Heart left ventricle (tissue), 16 donors: ENCODE measurements at regions of chr3 and their contacts with region 1.

Region 1: GRCh38 chr3:47315069-47315647 is 32.4 kb downstream of the KLHL18 start:
- DNase-seq: peak in 4 of 5 donors; percentile 53 to 77 (median 58)
- ATAC-seq: peak in 3 of 4 donors; percentile 13 to 72 (median 41)
- H3K4me3 ChIP-seq: peak overlapping the region in 1 of 12 donors; percentile 3
- H3K27ac ChIP-seq: peak overlapping the region in 1 of 12 donors; percentile 66
- H3K4me1 ChIP-seq: peaks cover 0 to 53% (median 30%) of the 10 kb centered on the region in 12 donors
- H3K27me3 ChIP-seq: no peaks in the 10 kb centered on the region
- CTCF ChIP-seq: no peak
- POLR2A ChIP-seq: no peak

Region 2: DNA sequence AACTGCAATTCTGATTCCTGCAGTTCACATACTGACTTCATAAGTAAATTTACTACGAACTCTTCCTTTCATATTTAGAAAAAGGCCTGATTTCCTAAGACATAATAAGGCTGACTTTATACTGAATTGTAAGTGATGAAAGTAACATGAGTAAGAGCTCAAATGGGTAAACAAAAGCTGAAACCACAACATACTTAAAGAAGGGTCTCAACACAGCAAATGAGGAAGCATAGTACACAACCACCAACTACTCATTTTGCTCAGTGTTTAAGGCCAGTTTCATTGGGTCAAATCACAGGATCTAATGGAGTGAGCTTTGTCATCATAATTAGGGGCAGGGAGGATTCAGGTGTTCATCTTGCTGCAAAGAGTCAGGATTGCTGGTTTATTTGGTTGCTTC is 232.6 kb before region 1 on chr3:
- intact Hi-C with region 1: loop called in 2 of 10 experiments (anchors 10 kb)
- DNase-seq: no peak
- ATAC-seq: no peak
- H3K4me3 ChIP-seq: no peak overlapping the region
- H3K27ac ChIP-seq: peak overlapping the region in 1 of 12 donors; percentile 12
- H3K4me1 ChIP-seq: peaks cover 0 to 23% (median 0%) of the 10 kb centered on the region in 12 donors
- H3K27me3 ChIP-seq: no peaks in the 10 kb centered on the region
- CTCF ChIP-seq: no peak
- POLR2A ChIP-seq: no peak

Region 3: DNA sequence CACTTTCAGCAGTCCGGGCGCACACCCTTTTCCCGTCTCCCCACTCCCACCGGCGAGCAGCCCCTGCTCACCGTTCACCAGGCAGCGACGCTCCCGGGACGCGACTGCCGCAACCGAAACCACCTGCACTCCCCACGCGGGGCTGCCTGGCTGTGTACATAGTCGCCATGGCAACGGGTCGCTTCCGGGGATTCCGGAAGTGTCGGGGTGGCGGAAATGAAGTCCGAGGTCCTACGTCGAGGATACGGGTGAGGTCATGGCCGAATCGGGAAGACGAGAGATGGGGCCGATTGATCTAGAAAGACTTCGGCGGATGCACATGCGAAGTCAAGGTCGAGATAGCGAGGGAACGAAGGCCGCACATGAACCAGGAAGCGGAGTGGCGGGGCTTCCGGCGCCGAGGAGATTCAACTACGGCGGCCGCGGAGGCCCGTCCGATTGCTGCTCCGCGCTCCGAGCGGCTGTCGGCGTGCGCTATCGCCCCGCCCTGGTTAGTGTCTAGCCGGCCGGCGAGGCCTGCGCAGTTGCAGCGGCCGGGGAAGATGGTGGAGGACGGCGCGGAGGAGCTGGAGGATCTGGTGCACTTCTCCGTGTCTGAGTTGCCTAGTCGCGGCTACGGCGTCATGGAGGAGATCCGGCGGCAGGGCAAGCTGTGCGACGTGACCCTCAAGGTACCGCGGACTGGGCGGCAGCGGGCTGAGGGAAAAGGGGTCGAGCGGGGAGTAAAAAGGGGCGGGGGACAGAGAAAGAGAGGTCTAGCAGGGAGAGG is 32.5 kb before region 1 on chr3 and contains the starts of genes KIF9 and KLHL18:
- intact Hi-C with region 1: loop called in 5 of 10 experiments (anchors 5 kb)
- DNase-seq: peak; percentile 94 to 97 (median 95)
- ATAC-seq: peak; percentile 91 to 98 (median 97)
- H3K4me3 ChIP-seq: peak within 1 kb of the TSS; percentile 66 to 90 (median 84)
- H3K27ac ChIP-seq: peak within 1 kb of the TSS; percentile 66 to 98 (median 94)
- H3K4me1 ChIP-seq: peaks cover 7 to 48% (median 30%) of the 10 kb centered on the region in 12 donors
- H3K27me3 ChIP-seq: no peaks in the 10 kb centered on the region
- CTCF ChIP-seq: peak in 1 of 12 donors; percentile 31
- POLR2A ChIP-seq: peak in 1 of 2 donors; percentile 42
- total RNA-seq, gene KIF9: 5.2 to 13.0 (median 8.6) TPM
- total RNA-seq, gene KLHL18: 15.2 to 51.0 (median 43.5) TPM